Activated naive CD4-positive, alpha-beta T cell treated with anti-CD3 and anti-CD28 coated beads for 36 hours (primary cell): ENCODE measurements at regions of chr5 and their contacts with region 1.

Region 1: GRCh38 chr5:139560752-139561654 is at the start of gene UBE2D2:
- DNase-seq: peak; percentile 98
- H3K4me3 Mint-ChIP-seq: peak within 1 kb of the TSS; percentile 94
- H3K27ac Mint-ChIP-seq: peak within 1 kb of the TSS; percentile 96
- H3K4me1 Mint-ChIP-seq: peaks cover 33% of the 10 kb centered on the region
- H3K27me3 Mint-ChIP-seq: no peaks in the 10 kb centered on the region
- total RNA-seq, gene UBE2D2: 221 to 243 TPM

Region 2: DNA sequence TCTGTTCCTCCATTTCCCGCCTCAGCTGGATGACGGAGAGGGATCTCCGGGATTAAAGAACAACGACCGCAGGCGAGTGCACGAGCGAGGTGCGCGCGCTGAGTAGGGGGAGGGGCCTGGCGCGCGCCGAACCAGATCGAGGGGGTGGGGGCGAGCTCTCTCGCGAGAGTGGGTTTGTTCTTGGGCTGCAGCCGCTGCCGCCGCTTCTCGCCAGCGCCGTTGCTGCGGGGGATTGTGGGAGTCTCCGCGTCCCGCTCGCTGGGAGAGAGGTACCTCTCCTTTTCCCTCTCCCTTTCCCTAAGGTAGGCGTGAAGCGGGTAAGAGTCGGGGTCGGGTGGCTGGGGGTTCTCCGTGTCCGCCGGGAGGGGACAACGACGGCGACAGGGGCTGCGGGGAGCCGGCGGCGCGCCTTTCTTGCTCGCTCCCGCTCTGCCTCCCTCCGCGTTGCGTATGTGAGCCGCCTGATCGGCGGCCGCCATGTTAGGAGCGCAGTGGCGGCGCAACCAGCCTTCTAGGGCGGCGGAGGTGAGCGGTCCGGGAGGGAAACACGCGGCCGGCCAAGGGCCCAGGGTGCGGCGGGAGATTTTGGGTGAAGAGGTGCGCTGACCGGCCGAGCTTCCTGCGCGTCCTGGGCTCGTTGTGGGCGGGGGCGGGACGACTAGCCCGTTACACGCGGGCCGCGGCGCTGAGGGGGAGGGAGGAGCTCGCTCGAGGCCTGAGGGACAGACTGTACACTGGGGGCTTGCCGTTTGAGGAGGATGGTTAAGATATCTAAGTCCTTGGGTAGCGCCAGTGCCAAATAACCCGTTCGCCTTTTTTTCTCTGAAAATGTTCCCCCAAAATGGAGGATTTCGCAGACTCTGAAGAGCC is 267.3 kb before region 1 on chr5 and contains the start of gene MATR3:
- CTCF ChIA-PET with region 1: no interaction called
- intact Hi-C with region 1: loop called (anchors 2 kb)
- DNase-seq: peak; percentile 96
- H3K4me3 Mint-ChIP-seq: peak within 1 kb of the TSS; percentile 89
- H3K27ac Mint-ChIP-seq: peak within 1 kb of the TSS; percentile 97
- H3K4me1 Mint-ChIP-seq: peaks cover 37% of the 10 kb centered on the region
- H3K27me3 Mint-ChIP-seq: no peaks in the 10 kb centered on the region
- total RNA-seq, gene MATR3: 137 to 164 TPM

Region 3: DNA sequence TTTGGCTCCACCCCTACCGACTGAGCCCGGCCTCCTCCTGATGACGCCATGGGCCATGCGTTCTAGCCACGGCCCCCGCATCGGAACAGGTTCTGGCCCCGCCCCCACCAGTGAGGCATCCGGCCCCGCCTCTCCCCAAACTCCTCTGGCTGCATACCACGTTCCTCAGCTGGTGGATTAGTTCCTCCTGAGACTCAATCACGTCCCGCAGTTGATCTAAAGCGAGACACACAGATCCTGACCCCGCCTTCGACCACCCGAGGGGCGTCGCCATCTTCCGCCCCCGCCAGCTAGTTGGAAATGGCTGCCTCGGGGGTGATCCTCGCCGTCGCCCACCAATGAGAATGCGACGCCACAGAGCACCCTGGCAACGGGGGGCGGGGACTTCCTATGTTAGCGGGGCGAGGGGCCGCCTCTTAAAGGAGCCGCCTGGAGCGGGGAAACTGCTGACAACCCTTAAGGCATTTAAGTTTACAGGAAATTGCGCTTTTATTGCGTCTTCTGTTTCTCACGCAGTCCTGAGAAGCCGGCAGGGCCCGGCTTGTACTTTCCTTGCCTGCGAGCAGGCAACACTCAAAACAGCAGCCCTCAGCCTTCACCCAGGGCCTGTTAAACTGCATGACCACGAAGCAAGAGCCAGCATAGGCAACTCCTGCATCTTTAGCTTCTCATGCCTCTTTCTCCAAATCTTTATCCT is 157.1 kb before region 1 on chr5 and contains the start of gene SPATA24:
- CTCF ChIA-PET with region 1: no interaction called
- intact Hi-C with region 1: loop called (anchors 1 kb)
- DNase-seq: peak; percentile 99
- H3K4me3 Mint-ChIP-seq: peak within 1 kb of the TSS; percentile 93
- H3K27ac Mint-ChIP-seq: peak within 1 kb of the TSS; percentile 100
- H3K4me1 Mint-ChIP-seq: peaks cover 37% of the 10 kb centered on the region
- H3K27me3 Mint-ChIP-seq: no peaks in the 10 kb centered on the region
- total RNA-seq, gene SPATA24: 6.0 to 7.4 TPM

Region 4: DNA sequence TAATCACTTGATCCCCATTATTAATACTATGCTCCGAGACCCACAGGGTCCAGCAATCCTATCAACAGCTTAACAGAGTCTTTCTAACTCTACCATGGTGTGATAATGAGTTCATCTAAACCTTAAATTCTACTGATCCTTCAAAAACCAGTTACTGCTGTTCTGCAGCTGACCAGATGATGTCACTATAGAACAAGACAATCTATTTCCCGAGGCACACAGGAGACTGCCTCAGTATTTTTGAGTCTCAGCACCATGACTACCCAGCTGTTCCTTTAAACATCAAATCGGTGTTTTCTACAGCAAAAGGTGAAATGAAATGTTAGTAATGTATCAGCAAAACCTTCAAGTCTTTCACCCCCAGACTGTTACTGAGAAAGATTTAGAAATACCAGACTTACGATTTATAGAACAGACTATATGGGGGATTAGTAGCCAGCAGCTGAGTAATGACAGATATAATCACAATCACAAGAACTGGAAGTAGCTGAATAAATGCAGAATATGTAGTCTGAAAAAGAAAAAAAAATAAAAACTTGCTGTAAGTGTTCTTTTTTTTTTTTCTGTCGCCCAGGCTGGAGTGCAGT is 138.6 kb before region 1 on chr5:
- CTCF ChIA-PET with region 1: interaction called, 5 read pairs
- intact Hi-C with region 1: loop called (anchors 2 kb)
- DNase-seq: peak; percentile 77
- H3K4me3 Mint-ChIP-seq: no peak overlapping the region
- H3K27ac Mint-ChIP-seq: no peak overlapping the region
- H3K4me1 Mint-ChIP-seq: peaks cover 5% of the 10 kb centered on the region
- H3K27me3 Mint-ChIP-seq: no peaks in the 10 kb centered on the region

Region 5: DNA sequence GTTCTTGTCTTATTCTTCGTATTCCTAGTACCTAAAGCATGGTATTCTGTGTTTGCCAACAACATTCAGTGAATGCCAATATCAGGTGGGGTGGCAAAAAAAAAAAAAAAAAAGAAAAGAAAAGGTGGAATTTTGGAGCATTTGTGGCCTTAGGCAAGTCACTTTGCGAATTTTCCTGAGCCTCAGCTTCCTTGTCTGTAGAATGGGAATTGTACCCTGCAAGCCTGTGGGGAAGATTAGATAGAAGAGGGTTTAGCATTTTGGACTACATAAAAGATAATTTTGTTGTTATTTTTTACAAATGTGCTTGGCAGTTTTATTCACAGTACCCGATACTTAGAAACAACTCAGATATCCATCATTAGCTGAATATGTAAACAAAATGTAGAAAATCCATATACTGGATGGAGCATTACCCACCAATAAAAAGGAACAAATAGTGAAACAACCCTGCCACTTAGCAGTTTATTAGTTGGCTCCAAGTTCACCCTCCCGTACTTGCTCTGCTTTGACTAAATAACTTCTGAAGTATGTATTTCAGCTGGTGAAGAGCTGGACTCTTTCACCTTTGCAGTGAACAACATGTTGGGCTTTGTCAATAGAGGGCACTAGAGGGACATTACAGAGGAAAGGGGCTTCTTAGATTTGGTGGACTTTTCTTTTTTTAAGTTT is 13.8 kb after region 1 on chr5:
- CTCF ChIA-PET with region 1: interaction called, 35 read pairs
- intact Hi-C with region 1: loop called (anchors 1 kb)
- DNase-seq: no peak
- H3K4me3 Mint-ChIP-seq: no peak overlapping the region
- H3K27ac Mint-ChIP-seq: no peak overlapping the region
- H3K4me1 Mint-ChIP-seq: peaks cover 74% of the 10 kb centered on the region
- H3K27me3 Mint-ChIP-seq: no peaks in the 10 kb centered on the region

Region 6: GRCh38 chr5:139745800-139746690 is 185.0 kb after region 1 on chr5:
- CTCF ChIA-PET with region 1: no interaction called
- intact Hi-C with region 1: loop called (anchors 2 kb)
- DNase-seq: peak; percentile 50
- H3K4me3 Mint-ChIP-seq: peak overlapping the region; percentile 72
- H3K27ac Mint-ChIP-seq: no peak overlapping the region
- H3K4me1 Mint-ChIP-seq: peaks cover 21% of the 10 kb centered on the region
- H3K27me3 Mint-ChIP-seq: peaks cover 15% of the 10 kb centered on the region